ENCODE measurements at regions of chr12 and their contacts with region 1.

Region 1: GRCh38 chr12:57546438-57547383 is at the start of gene DCTN2:
- H3K4me3 Mint-ChIP-seq: peak within 1 kb of the TSS; percentile 91
- H3K27ac Mint-ChIP-seq: peak within 1 kb of the TSS; percentile 91
- H3K4me1 Mint-ChIP-seq: peaks cover 57% of the 10 kb centered on the region
- H3K27me3 Mint-ChIP-seq: peaks cover 34% of the 10 kb centered on the region

Region 2: DNA sequence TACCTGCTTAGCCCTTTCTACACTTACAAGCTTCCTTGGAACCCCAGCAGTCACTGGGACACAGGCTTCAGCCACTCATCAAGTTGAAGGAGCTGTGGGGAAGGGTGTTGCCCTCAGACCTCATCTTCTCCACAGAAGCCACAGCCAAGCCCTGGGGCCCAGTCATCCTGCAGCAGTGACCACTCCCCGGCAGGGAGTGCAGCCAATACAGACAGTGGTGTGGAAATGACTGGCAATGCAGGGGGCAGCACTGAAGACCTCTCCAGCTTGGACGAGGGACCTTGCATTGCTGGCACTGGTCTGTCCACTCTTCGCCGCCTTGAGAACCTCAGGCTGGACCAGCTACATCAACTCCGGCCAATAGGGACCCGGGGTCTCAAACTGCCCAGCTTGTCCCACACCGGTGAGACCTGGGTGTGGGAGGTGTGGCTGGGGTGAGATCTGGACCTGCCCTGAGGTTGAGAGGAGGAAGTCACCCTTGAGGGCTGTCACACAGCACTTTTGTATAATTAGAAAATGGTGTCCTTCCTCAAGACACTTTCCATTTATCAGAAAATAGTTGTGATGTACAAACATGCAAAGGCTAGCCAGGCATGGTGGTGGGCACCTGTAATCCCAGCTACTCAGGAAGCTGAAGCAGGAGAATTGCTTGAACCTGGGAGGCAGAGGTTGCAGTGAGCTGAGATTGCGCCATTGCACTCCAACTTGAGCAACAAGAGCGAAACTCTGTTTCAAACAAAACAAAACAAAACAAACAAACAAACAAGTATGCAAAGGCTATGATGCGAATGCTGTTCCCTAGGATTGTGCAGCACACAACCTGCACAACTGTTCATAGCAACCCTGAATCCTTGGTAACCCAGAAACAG is 77.2 kb before region 1 on chr12:
- intact Hi-C with region 1: no loop called
- H3K4me3 Mint-ChIP-seq: no peak overlapping the region
- H3K27ac Mint-ChIP-seq: no peak overlapping the region
- H3K4me1 Mint-ChIP-seq: peaks cover 59% of the 10 kb centered on the region
- H3K27me3 Mint-ChIP-seq: peaks cover 12% of the 10 kb centered on the region

Region 3: DNA sequence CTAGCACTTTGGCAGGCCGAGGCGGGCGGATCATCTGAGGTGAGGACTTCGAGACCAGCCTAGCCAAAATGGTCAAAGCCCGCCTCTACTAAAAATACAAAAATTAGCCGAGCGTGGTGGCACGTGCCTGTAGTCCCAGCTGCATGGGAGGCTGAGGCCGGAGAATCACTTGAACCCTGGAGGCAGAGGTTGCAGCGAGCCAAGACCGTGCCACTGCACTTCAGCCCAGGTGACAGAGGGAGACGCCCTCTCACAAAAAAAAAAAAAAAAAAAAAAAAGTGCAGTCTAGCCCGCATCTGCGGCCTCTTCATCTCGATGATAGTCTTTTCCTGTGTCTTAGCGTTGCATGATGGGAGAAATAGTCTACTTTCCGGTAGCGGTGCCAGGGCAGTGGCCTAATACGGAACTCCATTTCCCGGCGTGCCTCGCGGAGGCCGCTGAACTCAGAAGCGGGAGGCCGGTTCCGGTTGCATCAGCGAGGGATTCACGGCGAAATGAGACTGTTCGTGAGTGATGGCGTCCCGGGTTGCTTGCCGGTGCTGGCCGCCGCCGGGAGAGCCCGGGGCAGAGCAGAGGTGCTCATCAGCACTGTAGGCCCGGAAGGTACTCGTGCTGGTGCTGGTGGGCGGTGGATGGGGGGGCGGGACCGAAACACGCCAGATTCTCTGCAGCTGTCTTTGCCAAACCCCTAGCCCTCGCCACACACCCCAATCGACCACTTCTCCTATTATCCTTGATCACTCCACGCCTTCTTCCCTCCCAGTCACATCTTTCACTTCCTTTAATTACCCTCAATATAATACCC is 58.9 kb before region 1 on chr12 and contains the start of gene MARS1:
- intact Hi-C with region 1: loop called (anchors 1 kb)
- H3K4me3 Mint-ChIP-seq: peak within 1 kb of the TSS; percentile 90
- H3K27ac Mint-ChIP-seq: peak within 1 kb of the TSS; percentile 91
- H3K4me1 Mint-ChIP-seq: peaks cover 33% of the 10 kb centered on the region
- H3K27me3 Mint-ChIP-seq: no peaks in the 10 kb centered on the region

Region 4: DNA sequence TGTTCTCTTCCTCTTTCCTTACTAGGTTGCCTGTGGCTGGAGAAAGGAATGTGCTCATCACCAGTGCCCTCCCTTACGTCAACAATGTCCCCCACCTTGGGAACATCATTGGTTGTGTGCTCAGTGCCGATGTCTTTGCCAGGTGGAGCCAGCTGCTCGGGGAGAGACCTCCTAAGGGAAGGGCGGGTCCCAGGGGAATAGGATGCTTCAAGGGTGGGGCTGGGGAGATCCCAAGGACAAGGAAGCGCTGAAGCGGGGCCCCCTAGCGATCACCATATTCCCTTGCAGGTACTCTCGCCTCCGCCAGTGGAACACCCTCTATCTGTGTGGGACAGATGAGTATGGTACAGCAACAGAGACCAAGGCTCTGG is 48.6 kb before region 1 on chr12:
- intact Hi-C with region 1: no loop called
- H3K4me3 Mint-ChIP-seq: no peak overlapping the region
- H3K27ac Mint-ChIP-seq: no peak overlapping the region
- H3K4me1 Mint-ChIP-seq: peaks cover 9% of the 10 kb centered on the region
- H3K27me3 Mint-ChIP-seq: no peaks in the 10 kb centered on the region

Region 5: DNA sequence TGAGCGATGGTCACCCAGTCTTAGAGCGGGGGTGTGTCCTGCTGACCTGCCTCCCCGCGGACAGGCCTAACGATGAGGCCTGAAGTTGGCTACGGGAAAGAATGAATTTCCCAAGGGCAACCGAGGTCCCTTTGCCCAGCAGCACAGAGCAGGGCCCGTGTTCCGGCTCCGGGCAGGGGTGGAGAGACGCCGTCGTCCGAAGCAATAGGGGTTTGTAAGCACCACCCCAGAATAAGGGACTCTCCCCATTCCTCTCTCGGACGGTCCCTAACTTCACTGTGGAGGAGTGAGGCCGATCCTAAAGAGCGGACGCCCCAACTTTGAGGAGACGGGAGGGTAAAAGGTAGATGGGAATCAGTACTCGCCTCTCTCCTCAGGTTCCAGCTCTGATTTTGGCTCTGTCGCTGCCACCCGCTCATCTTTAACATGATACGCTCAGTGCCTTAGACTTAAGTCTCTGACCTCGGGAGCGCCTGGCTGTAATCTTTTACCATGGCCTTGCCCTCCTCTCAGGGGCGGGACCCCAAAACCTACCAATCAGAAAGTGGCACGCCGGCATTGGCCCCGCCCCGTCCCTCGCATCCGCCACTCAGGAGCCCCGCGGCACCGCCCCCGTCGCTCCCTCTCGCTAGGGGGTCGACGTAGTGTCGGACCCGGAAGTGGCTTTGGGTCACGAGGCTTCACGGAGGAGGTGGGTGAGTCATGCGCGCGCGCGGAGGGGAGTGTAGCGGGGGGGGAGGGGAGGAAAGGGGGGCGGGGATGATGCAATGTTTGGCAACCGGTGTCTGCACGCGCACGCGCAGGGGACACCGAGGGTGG is 26.4 kb before region 1 on chr12 and contains the start of gene DDIT3:
- intact Hi-C with region 1: loop called (anchors 1 kb)
- H3K4me3 Mint-ChIP-seq: peak within 1 kb of the TSS; percentile 95
- H3K27ac Mint-ChIP-seq: peak within 1 kb of the TSS; percentile 98
- H3K4me1 Mint-ChIP-seq: peaks cover 69% of the 10 kb centered on the region
- H3K27me3 Mint-ChIP-seq: no peaks in the 10 kb centered on the region

Region 6: GRCh38 chr12:57583008-57583831 is 36.5 kb after region 1 on chr12:
- intact Hi-C with region 1: no loop called
- H3K4me3 Mint-ChIP-seq: no peak overlapping the region
- H3K27ac Mint-ChIP-seq: no peak overlapping the region
- H3K4me1 Mint-ChIP-seq: peaks cover 25% of the 10 kb centered on the region
- H3K27me3 Mint-ChIP-seq: peaks cover 24% of the 10 kb centered on the region

Region 7: GRCh38 chr12:57751788-57752667 is 205.3 kb after region 1 on chr12 and contains the start of gene CDK4:
- intact Hi-C with region 1: loop called (anchors 5 kb)
- H3K4me3 Mint-ChIP-seq: peak within 1 kb of the TSS; percentile 81
- H3K27ac Mint-ChIP-seq: peak within 1 kb of the TSS; percentile 83
- H3K4me1 Mint-ChIP-seq: peaks cover 64% of the 10 kb centered on the region
- H3K27me3 Mint-ChIP-seq: peaks cover 7% of the 10 kb centered on the region

Measured in dendritic cell treated with granulocyte-macrophage colony-stimulating factor and Interleukin-4, amounts not matched to agents 40 ng/mL and 50 ng/mL, for 4 days (primary cell).